ENCODE measurements at regions of chr11 and their contacts with region 1.

Region 1: GRCh38 chr11:6012035-6012668 is 5.4 kb upstream of the OR56A4 start:
- DNase-seq: no peak
- ATAC-seq: peak in 1 of 8 donors; percentile 14
- H3K4me3 ChIP-seq: no peak overlapping the region
- H3K27ac ChIP-seq: no peak overlapping the region
- H3K4me1 ChIP-seq: peaks cover 0 to 4% (median 0%) of the 10 kb centered on the region in 9 donors
- H3K27me3 ChIP-seq: peaks cover 0 to 5% (median 0%) of the 10 kb centered on the region in 7 donors
- CTCF ChIP-seq: no peak

Region 2: DNA sequence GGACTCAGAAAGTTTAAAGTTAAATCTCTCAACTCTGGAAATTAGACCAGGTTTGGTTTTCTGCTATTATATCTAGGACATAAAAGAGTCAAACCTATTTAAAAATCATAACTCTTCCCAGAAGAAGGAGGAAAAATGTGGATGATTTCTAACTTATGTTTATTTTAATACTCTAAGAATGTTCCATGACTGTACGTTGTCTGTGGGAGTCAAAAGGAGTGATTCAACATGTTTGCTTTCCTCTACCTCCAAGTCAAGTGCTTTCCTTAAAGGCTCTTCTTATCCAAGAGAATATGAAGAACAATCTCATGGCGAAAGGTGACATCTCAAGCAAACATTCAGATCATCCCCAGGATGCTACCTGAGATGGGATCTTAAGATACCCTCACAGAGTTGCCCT is 1346.7 kb before region 1 on chr11:
- intact Hi-C with region 1: loop called in 1 of 10 experiments (anchors 5 kb)
- DNase-seq: no peak
- ATAC-seq: no peak
- H3K4me3 ChIP-seq: no peak overlapping the region
- H3K27ac ChIP-seq: no peak overlapping the region
- H3K4me1 ChIP-seq: no peaks in the 10 kb centered on the region
- H3K27me3 ChIP-seq: no peaks in the 10 kb centered on the region
- CTCF ChIP-seq: no peak

Region 3: GRCh38 chr11:5955586-5955985 is 56.6 kb before region 1 on chr11:
- intact Hi-C with region 1: no loop called
- DNase-seq: no peak
- ATAC-seq: no peak
- H3K4me3 ChIP-seq: no peak overlapping the region
- H3K27ac ChIP-seq: no peak overlapping the region
- H3K4me1 ChIP-seq: no peaks in the 10 kb centered on the region
- H3K27me3 ChIP-seq: no peaks in the 10 kb centered on the region
- CTCF ChIP-seq: no peak

Region 4: GRCh38 chr11:6333112-6333511 is 321.0 kb after region 1 on chr11:
- intact Hi-C with region 1: no loop called
- DNase-seq: no peak
- ATAC-seq: no peak
- H3K4me3 ChIP-seq: no peak overlapping the region
- H3K27ac ChIP-seq: peak overlapping the region in 1 of 10 donors; percentile 28
- H3K4me1 ChIP-seq: peaks cover 0 to 21% (median 9%) of the 10 kb centered on the region in 9 donors
- H3K27me3 ChIP-seq: no peaks in the 10 kb centered on the region
- CTCF ChIP-seq: no peak

Region 5: DNA sequence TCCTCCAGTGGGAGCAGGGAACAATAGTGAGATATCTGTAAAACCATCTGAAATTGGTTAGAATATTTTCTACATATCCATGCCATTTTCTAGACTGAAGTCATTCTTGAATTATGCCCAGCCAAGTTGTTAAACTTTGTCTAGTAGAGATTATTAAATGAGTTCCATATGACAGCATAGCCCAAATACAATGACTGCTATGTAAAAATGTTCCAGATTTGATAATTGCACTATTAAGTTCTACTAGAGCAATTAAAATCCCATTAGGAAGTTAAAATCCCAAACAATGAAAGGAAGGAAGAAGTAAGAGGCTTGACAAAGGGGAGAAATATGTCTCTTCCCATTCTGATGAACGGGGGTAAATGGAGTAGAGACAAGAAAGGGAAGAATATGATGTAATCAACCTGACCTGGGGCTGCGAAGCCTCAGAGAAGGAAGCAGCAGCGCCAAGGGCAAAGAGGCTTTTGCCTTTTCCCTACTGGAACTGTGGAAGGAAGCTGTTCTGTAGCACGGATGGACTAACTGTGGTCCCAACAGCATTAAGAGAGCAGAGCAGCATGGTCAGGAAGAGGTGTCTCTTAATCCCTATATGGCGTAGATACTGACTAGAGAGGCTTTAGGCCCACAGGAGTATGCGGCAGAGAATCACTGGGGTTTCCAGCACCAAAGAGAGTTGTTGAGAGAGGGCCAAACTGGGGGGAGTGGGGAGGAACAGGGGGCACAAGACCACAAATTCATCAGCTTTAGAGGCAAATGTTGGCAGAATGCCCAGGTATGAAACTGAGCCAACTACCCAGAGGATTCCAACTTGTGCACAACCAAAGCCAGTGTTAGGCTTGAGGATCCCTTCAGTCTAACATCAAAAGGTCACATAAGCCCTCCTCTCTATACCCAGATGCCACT is 564.6 kb after region 1 on chr11:
- intact Hi-C with region 1: no loop called
- DNase-seq: peak in 1 of 2 donors; percentile 60
- ATAC-seq: peak; percentile 63 to 85 (median 75)
- H3K4me3 ChIP-seq: no peak overlapping the region
- H3K27ac ChIP-seq: peak overlapping the region in 9 of 10 donors; percentile 37 to 82 (median 63)
- H3K4me1 ChIP-seq: peaks cover 10 to 27% (median 21%) of the 10 kb centered on the region in 9 donors
- H3K27me3 ChIP-seq: no peaks in the 10 kb centered on the region
- CTCF ChIP-seq: no peak

Measured in heart right ventricle (tissue), 16 donors.